ENCODE measurements at regions of chr3 and their contacts with region 1.

Region 1: GRCh38 chr3:156151824-156152428 is 31.5 kb downstream of the KCNAB1 start:
- DNase-seq: peak; percentile 49 to 62
- H3K4me3 ChIP-seq: no peak overlapping the region
- H3K27ac ChIP-seq: no peak overlapping the region
- H3K4me1 ChIP-seq: no peaks in the 10 kb centered on the region
- H3K27me3 ChIP-seq: no peaks in the 10 kb centered on the region
- CTCF ChIP-seq: peak; percentile 92

Region 2: DNA sequence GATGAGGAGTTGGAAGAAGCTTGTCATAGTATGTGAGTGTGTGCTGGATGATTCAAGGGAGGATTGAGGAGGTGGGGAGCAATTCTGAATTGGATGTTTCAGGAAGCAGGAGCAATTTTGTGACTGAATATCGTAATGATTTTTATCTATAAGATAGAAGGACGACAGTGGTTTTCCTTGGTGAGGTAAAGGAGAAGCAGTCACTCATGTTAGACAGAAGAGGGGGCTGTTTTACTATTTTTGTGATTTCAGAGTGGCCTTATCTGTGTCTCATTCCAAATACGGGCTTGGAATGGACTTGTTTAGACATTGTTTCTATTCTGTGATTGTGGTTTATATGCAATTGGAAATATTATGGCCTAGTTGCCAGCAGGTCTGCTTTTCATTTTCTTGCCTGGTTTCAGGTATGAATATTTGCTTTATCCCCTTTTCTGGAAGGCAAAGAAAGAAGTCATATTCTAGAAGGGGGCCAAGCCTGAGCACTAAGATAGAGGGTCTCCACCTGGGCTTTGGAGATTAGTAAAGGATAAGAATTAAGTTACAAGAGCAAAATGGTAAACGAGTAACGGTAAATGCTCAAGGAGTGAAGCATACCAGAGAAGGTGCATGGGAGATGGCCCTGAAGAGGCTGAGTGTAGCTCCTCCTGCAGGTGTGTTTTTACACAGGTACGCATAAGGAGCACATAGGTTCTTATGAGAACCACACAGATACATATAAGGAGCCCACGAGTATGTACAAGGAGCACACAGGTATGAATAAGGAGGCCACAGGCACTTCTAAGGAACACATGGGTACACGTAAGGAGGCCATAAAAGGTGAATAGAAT is 156.2 kb before region 1 on chr3:
- CTCF ChIA-PET with region 1: no interaction called
- POLR2A ChIA-PET with region 1: no interaction called
- intact Hi-C with region 1: loop called (anchors 5 kb)
- DNase-seq: peak in 1 of 2 experiments; percentile 54
- H3K4me3 ChIP-seq: no peak overlapping the region
- H3K27ac ChIP-seq: no peak overlapping the region
- H3K4me1 ChIP-seq: no peaks in the 10 kb centered on the region
- H3K27me3 ChIP-seq: no peaks in the 10 kb centered on the region
- CTCF ChIP-seq: peak; percentile 80

Region 3: GRCh38 chr3:156131241-156131640 is 20.7 kb before region 1 on chr3:
- CTCF ChIA-PET with region 1: no interaction called
- POLR2A ChIA-PET with region 1: no interaction called
- intact Hi-C with region 1: no loop called
- DNase-seq: no peak
- H3K4me3 ChIP-seq: no peak overlapping the region
- H3K27ac ChIP-seq: no peak overlapping the region
- H3K4me1 ChIP-seq: no peaks in the 10 kb centered on the region
- H3K27me3 ChIP-seq: no peaks in the 10 kb centered on the region
- CTCF ChIP-seq: no peak

Region 4: GRCh38 chr3:156382458-156383346 is 230.8 kb after region 1 on chr3:
- CTCF ChIA-PET with region 1: interaction called, 7 read pairs
- POLR2A ChIA-PET with region 1: no interaction called
- intact Hi-C with region 1: loop called (anchors 5 kb)
- DNase-seq: peak in 1 of 2 experiments; percentile 25
- H3K4me3 ChIP-seq: no peak overlapping the region
- H3K27ac ChIP-seq: no peak overlapping the region
- H3K4me1 ChIP-seq: no peaks in the 10 kb centered on the region
- H3K27me3 ChIP-seq: peaks cover 9% of the 10 kb centered on the region; the same call in 1 of the 2 replicates
- CTCF ChIP-seq: peak; percentile 82

Region 5: GRCh38 chr3:156449712-156450574 is 298.0 kb after region 1 on chr3:
- CTCF ChIA-PET with region 1: no interaction called
- POLR2A ChIA-PET with region 1: no interaction called
- intact Hi-C with region 1: loop called (anchors 2 kb)
- DNase-seq: peak in 1 of 2 experiments; percentile 25
- H3K4me3 ChIP-seq: no peak overlapping the region
- H3K27ac ChIP-seq: no peak overlapping the region
- H3K4me1 ChIP-seq: no peaks in the 10 kb centered on the region
- H3K27me3 ChIP-seq: no peaks in the 10 kb centered on the region
- CTCF ChIP-seq: peak; percentile 65

Region 6: DNA sequence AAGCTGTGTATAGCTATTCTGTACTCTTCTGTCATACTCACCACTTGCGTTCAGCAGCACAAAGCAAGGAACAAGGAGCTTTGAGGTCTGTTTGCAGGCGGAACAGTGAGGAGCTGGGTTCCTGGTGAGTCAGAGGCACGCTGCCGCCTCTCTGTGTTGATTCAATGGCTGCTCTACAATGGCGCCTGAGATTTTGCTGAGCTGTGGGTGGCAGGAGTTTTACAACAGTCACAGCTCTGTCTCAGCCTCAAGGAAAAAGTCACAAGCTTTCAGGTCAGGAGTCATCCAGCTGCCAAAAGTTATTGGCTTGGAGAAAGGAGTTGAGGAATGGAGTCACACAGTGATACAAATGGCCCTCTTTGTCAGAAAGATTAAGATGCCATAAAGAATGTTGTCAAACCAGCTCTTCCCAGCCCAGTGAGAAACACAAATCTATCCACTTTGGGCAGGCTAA is 304.9 kb after region 1 on chr3:
- CTCF ChIA-PET with region 1: no interaction called
- POLR2A ChIA-PET with region 1: no interaction called
- intact Hi-C with region 1: loop called (anchors 2 kb)
- DNase-seq: peak; percentile 72 to 87
- H3K4me3 ChIP-seq: peak overlapping the region; percentile 38; the same call in 1 of the 2 replicates
- H3K27ac ChIP-seq: peak overlapping the region; percentile 74
- H3K4me1 ChIP-seq: peaks cover 22% of the 10 kb centered on the region
- H3K27me3 ChIP-seq: no peaks in the 10 kb centered on the region
- CTCF ChIP-seq: no peak

Region 7: GRCh38 chr3:156509189-156510174 is 357.6 kb after region 1 on chr3:
- CTCF ChIA-PET with region 1: interaction called, 8 read pairs
- POLR2A ChIA-PET with region 1: no interaction called
- intact Hi-C with region 1: loop called (anchors 1 kb)
- DNase-seq: peak; percentile 9 to 58
- H3K4me3 ChIP-seq: no peak overlapping the region
- H3K27ac ChIP-seq: no peak overlapping the region
- H3K4me1 ChIP-seq: peaks cover 11% of the 10 kb centered on the region
- H3K27me3 ChIP-seq: no peaks in the 10 kb centered on the region
- CTCF ChIP-seq: peak; percentile 88

Region 8: GRCh38 chr3:157499342-157499963 is 1347.5 kb after region 1 on chr3:
- CTCF ChIA-PET with region 1: no interaction called
- POLR2A ChIA-PET with region 1: no interaction called
- intact Hi-C with region 1: loop called (anchors 5 kb)
- DNase-seq: peak; percentile 93 to 96
- H3K4me3 ChIP-seq: peak overlapping the region; percentile 50
- H3K27ac ChIP-seq: peak overlapping the region; percentile 84
- H3K4me1 ChIP-seq: peaks cover 30% of the 10 kb centered on the region
- H3K27me3 ChIP-seq: no peaks in the 10 kb centered on the region
- CTCF ChIP-seq: peak; percentile 43

Measured in PC-9 (cell line).